Heart left ventricle (tissue), 16 donors: ENCODE measurements at regions of chr2 and their contacts with region 1.

Region 1: DNA sequence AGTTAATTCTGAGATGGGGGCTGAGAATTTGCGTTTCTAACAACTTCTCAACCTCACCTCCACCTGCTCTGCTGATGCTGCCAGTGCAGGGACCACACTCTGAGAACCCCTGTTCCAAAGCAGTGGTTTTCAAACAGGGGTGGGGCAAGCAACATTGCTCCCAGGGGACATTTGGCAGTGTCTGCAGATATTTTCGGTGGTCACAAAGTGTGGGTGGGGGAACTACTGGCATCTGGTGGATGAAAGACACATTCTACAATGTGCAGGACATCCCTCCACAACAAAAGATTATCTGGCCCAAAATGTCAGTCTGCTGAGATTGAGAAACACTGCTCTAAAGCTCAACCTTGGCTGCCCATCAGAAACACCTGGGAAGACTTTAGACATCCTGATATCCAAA is 188.7 kb upstream of the SATB2 start:
- DNase-seq: no peak
- ATAC-seq: no peak
- H3K4me3 ChIP-seq: no peak overlapping the region
- H3K27ac ChIP-seq: no peak overlapping the region
- H3K4me1 ChIP-seq: no peaks in the 10 kb centered on the region
- H3K27me3 ChIP-seq: no peaks in the 10 kb centered on the region
- CTCF ChIP-seq: no peak
- POLR2A ChIP-seq: no peak

Region 2: GRCh38 chr2:199064201-199064600 is 582.2 kb before region 1 on chr2:
- intact Hi-C with region 1: loop called in 1 of 10 experiments (anchors 10 kb)
- DNase-seq: no peak
- ATAC-seq: no peak
- H3K4me3 ChIP-seq: no peak overlapping the region
- H3K27ac ChIP-seq: no peak overlapping the region
- H3K4me1 ChIP-seq: no peaks in the 10 kb centered on the region
- H3K27me3 ChIP-seq: no peaks in the 10 kb centered on the region
- CTCF ChIP-seq: no peak
- POLR2A ChIP-seq: no peak

Region 3: GRCh38 chr2:199606193-199606780 is 40.2 kb before region 1 on chr2:
- intact Hi-C with region 1: no loop called
- DNase-seq: no peak
- ATAC-seq: no peak
- H3K4me3 ChIP-seq: no peak overlapping the region
- H3K27ac ChIP-seq: no peak overlapping the region
- H3K4me1 ChIP-seq: peaks cover 0 to 5% (median 0%) of the 10 kb centered on the region in 12 donors
- H3K27me3 ChIP-seq: peaks cover 0 to 32% (median 6%) of the 10 kb centered on the region in 9 donors
- CTCF ChIP-seq: peak in 1 of 12 donors; percentile 10
- POLR2A ChIP-seq: no peak

Region 4: GRCh38 chr2:199631129-199631528 is 15.3 kb before region 1 on chr2:
- intact Hi-C with region 1: loop called in 1 of 10 experiments (anchors 1 kb)
- DNase-seq: no peak
- ATAC-seq: no peak
- H3K4me3 ChIP-seq: no peak overlapping the region
- H3K27ac ChIP-seq: no peak overlapping the region
- H3K4me1 ChIP-seq: no peaks in the 10 kb centered on the region
- H3K27me3 ChIP-seq: no peaks in the 10 kb centered on the region
- CTCF ChIP-seq: no peak
- POLR2A ChIP-seq: no peak

Region 5: DNA sequence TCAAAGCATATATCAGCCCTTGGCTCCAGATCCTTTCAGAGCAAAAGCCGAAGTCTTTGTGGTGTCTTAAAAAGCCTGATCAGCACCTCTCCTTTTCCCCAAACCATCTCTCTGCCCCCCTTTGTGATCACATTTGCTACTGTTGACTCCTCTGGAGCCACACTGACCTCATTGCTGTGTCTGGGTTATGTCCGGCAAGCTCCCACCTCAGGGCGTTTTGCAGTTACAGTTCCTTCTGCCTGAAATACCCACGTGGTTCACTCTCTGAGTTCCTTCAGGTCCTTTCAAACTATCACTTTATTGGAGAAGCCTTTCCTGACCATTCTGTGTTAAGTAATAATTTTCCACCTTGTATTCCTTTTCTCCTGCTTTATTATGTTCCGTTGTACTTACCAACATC is 276.4 kb after region 1 on chr2:
- intact Hi-C with region 1: no loop called
- DNase-seq: no peak
- ATAC-seq: peak in 1 of 4 donors; percentile 63
- H3K4me3 ChIP-seq: no peak overlapping the region
- H3K27ac ChIP-seq: no peak overlapping the region
- H3K4me1 ChIP-seq: peaks cover 0 to 7% (median 0%) of the 10 kb centered on the region in 12 donors
- H3K27me3 ChIP-seq: no peaks in the 10 kb centered on the region
- CTCF ChIP-seq: no peak
- POLR2A ChIP-seq: no peak